ENCODE measurements at regions of chr14 and their contacts with region 1.

Region 1: DNA sequence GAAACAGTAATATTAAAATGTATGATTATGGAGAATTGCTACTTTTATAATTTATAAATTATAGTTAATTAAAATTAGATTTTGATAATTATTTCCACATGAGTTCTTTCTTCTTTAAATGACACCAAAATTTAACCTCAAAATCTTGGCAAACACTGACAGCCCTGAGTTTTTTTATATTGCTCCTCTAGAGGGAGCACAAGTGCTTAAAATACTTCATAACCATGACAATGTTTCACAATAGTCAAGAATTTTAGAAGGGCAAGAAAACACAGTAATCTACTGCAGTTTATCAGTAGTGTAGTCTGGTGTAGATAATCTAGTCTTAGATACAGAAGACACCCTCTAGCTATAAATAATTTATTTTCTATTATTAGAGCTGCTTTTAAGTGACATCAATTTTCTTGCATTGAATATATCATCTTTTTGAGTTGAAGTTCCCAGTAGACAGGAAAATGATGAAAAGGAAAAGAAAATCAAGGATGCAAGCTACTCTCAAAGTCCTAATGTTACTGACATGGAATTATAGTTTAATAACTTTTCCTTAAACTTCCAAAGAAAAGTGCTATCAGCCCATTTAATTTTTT is 14.3 kb upstream of the PTGER2 start:
- DNase-seq: no peak

Region 2: GRCh38 chr14:52473557-52473956 is 173.8 kb after region 1 on chr14:
- intact Hi-C with region 1: loop called (anchors 2 kb)
- DNase-seq: no peak

Measured in posterior cingulate gyrus (tissue), 11 donors.